Mammary epithelial cell (primary cell): ENCODE measurements at regions of chr5 and their contacts with region 1.

Region 1: GRCh38 chr5:39148983-39149534 is 70.3 kb downstream of the FYB1 start:
- DNase-seq: no peak
- H3K4me3 ChIP-seq: no peak overlapping the region
- H3K27ac ChIP-seq: no peak overlapping the region
- H3K4me1 ChIP-seq: no peaks in the 10 kb centered on the region
- H3K27me3 ChIP-seq: no peaks in the 10 kb centered on the region
- CTCF ChIP-seq: peak; percentile 33 to 41

Region 2: GRCh38 chr5:38680094-38680825 is 468.8 kb before region 1 on chr5:
- CTCF ChIA-PET with region 1: no interaction called
- dilution Hi-C with region 1: no loop called
- in situ Hi-C with region 1: no loop called
- intact Hi-C with region 1: no loop called
- DNase-seq: no peak
- H3K4me3 ChIP-seq: no peak overlapping the region
- H3K27ac ChIP-seq: no peak overlapping the region
- H3K4me1 ChIP-seq: no peaks in the 10 kb centered on the region
- H3K27me3 ChIP-seq: peaks cover 2% of the 10 kb centered on the region
- CTCF ChIP-seq: no peak

Region 3: DNA sequence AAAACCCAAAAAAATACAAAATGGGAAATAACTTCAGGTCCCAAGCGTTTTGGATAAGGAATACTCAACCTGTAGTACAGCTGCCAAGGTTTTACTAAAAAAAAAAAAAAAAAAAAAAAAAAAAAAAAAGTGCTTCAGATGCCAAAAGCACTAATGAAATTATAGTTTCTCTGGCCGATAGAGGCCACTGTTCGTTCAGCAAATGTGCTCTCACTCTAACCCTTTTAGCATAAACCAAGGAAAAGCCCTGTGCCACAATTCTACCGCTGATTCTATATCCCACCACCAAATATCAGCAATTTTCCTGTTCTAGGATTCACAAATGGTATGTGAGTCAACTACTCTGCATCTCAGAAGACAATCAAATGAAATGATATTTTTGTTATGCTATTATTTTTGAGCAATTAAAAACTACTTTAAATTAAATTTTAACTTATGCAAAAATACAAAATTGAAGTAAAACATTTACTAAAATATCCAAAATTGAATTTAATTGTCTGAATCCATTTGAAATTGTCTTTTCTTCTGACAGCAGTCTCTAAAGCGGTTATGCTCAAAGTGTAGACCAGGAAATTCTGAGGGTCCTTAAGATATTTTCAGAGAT is 154.6 kb before region 1 on chr5:
- CTCF ChIA-PET with region 1: no interaction called
- dilution Hi-C with region 1: no loop called
- in situ Hi-C with region 1: no loop called
- intact Hi-C with region 1: loop called (anchors 5 kb)
- DNase-seq: peak; percentile 61
- H3K4me3 ChIP-seq: no peak overlapping the region
- H3K27ac ChIP-seq: no peak overlapping the region
- H3K4me1 ChIP-seq: no peaks in the 10 kb centered on the region
- H3K27me3 ChIP-seq: no peaks in the 10 kb centered on the region
- CTCF ChIP-seq: peak; percentile 49 to 63

Region 4: GRCh38 chr5:39117401-39117800 is 31.7 kb before region 1 on chr5:
- CTCF ChIA-PET with region 1: no interaction called
- dilution Hi-C with region 1: no loop called
- in situ Hi-C with region 1: no loop called
- intact Hi-C with region 1: no loop called
- DNase-seq: no peak
- H3K4me3 ChIP-seq: no peak overlapping the region
- H3K27ac ChIP-seq: no peak overlapping the region
- H3K4me1 ChIP-seq: no peaks in the 10 kb centered on the region
- H3K27me3 ChIP-seq: no peaks in the 10 kb centered on the region
- CTCF ChIP-seq: no peak

Region 5: GRCh38 chr5:39164529-39165402 is 15.7 kb after region 1 on chr5:
- CTCF ChIA-PET with region 1: no interaction called
- dilution Hi-C with region 1: no loop called
- in situ Hi-C with region 1: no loop called
- intact Hi-C with region 1: no loop called
- DNase-seq: peak; percentile 30
- H3K4me3 ChIP-seq: no peak overlapping the region
- H3K27ac ChIP-seq: no peak overlapping the region
- H3K4me1 ChIP-seq: peaks cover 5% of the 10 kb centered on the region
- H3K27me3 ChIP-seq: no peaks in the 10 kb centered on the region
- CTCF ChIP-seq: no peak

Region 6: GRCh38 chr5:39231705-39232525 is 82.9 kb after region 1 on chr5:
- CTCF ChIA-PET with region 1: no interaction called
- dilution Hi-C with region 1: no loop called
- in situ Hi-C with region 1: no loop called
- intact Hi-C with region 1: no loop called
- DNase-seq: peak; percentile 94
- H3K4me3 ChIP-seq: no peak overlapping the region
- H3K27ac ChIP-seq: peak overlapping the region; percentile 90
- H3K4me1 ChIP-seq: peaks cover 15% of the 10 kb centered on the region
- H3K27me3 ChIP-seq: no peaks in the 10 kb centered on the region
- CTCF ChIP-seq: no peak

Region 7: DNA sequence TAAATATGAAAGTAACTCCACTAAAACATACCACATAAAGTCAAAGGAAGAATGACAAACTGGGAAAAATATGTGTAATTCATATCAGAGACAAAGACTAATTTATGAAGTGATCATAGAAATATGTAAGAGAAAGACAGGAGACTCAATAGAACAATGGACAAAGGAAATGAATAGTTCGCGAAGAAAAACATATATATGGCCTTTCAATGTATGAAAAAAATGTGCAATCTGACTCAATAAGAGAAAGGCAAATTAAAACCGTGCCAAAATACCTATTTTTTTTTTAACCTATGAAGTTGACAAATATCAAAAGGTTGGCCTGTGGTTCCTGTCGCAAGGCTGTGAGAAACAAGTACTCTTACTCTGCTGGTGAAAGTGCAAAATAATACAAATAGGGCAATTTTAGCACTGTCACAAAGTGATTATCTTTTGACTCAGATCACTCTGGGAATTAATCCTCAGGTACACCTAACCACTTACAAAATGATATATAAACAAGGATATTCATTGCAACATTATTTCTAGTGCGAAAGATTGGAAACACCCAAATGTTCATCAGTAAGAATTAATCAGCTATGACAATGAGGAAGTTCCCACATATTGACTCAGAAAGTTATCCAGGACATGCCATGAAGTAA is 211.5 kb after region 1 on chr5:
- CTCF ChIA-PET with region 1: no interaction called
- dilution Hi-C with region 1: no loop called
- in situ Hi-C with region 1: no loop called
- intact Hi-C with region 1: loop called (anchors 5 kb)
- DNase-seq: peak; percentile 91
- H3K4me3 ChIP-seq: no peak overlapping the region
- H3K27ac ChIP-seq: peak overlapping the region; percentile 92
- H3K4me1 ChIP-seq: peaks cover 20% of the 10 kb centered on the region
- H3K27me3 ChIP-seq: no peaks in the 10 kb centered on the region
- CTCF ChIP-seq: no peak